Tibial artery (tissue), 4 donors: ENCODE measurements at regions of chr22 and their contacts with region 1.

Region 1: GRCh38 chr22:38881464-38881871 is 9.5 kb upstream of the CBX6 start:
- DNase-seq: peak; percentile 82 to 95
- H3K4me3 ChIP-seq: peak overlapping the region; percentile 31 to 34
- H3K27ac ChIP-seq: peak overlapping the region; percentile 81 to 87
- H3K4me1 ChIP-seq: peaks cover 0 to 49% (median 31%) of the 10 kb centered on the region in 4 donors
- H3K27me3 ChIP-seq: no peaks in the 10 kb centered on the region
- CTCF ChIP-seq: peak in 1 of 2 experiments; percentile 25

Region 2: DNA sequence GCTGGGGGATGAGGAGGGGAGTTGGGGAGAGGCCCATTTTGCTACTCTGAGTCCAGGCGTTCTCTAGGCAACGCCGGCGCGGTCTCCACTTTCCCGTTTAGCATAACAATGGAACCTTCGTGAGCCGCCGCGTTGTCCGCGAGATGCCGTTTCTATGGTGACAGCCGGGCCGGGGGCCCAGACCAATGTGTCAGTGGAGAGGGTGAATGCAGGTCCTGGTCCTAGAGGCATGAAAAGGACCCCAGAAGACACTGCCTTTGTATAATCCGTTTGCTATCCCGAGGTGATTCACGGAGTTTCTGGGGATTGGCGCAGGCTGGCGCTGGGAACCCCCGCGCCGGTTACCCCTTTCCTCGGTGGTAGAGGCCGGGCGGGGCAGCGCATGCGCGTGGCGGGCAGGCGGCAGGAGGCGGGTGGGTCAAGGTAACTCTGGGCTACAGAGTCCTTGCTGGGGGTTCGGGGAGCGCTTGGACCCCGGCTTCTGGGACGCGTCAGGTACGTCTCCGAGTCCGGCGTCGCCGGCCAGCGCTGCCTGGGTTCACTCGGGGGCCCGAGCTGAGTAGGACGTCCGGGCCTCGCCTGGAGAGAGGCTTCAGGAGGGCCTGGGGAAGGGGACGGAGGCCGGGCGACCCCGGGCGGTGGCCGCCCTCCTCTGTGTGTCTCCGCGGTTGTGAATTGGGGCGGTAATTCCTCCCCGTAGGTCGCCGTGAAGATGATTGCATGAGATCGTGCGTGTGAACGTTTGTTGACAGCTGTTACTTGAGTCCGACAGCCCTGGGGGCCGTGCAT is 225.0 kb before region 1 on chr22 and contains the starts of genes CBY1 and FAM227A:
- intact Hi-C with region 1: no loop called
- DNase-seq: peak; percentile 86 to 88
- H3K4me3 ChIP-seq: peak within 1 kb of the TSS; percentile 76 to 78
- H3K27ac ChIP-seq: peak within 1 kb of the TSS; percentile 81 to 85
- H3K4me1 ChIP-seq: peaks cover 0 to 22% (median 14%) of the 10 kb centered on the region in 4 donors
- H3K27me3 ChIP-seq: no peaks in the 10 kb centered on the region
- CTCF ChIP-seq: no peak

Region 3: GRCh38 chr22:38927033-38927781 is 45.7 kb after region 1 on chr22:
- intact Hi-C with region 1: loop called (anchors 1 kb)
- DNase-seq: peak; percentile 63 to 86
- H3K4me3 ChIP-seq: peak overlapping the region; percentile 44 to 51
- H3K27ac ChIP-seq: peak overlapping the region; percentile 75 to 82
- H3K4me1 ChIP-seq: peaks cover 0 to 51% (median 27%) of the 10 kb centered on the region in 4 donors
- H3K27me3 ChIP-seq: no peaks in the 10 kb centered on the region
- CTCF ChIP-seq: peak; percentile 33 to 72